Activated T-helper 1 cell treated with anti-CD3 and anti-CD28 coated beads, Interleukin-12 subunit alpha, Interleukin-12 subunit beta, Interleukin-2, Interleukin-4 antibody, amounts not matched to agents 30 ng/mL and 10 ng/mL and 1 ng/mL, durations not matched to agents 14 hours and 24 hours and 36 hours (primary cell): ENCODE measurements at regions of chrX and their contacts with region 1.

Region 1: GRCh38 chrX:10722851-10723250 is 102.5 kb upstream of the MID1 start:
- DNase-seq: no peak
- H3K4me3 Mint-ChIP-seq: no peak overlapping the region
- H3K27ac Mint-ChIP-seq: no peak overlapping the region
- H3K4me1 Mint-ChIP-seq: no peaks in the 10 kb centered on the region
- H3K27me3 Mint-ChIP-seq: no peaks in the 10 kb centered on the region

Region 2: DNA sequence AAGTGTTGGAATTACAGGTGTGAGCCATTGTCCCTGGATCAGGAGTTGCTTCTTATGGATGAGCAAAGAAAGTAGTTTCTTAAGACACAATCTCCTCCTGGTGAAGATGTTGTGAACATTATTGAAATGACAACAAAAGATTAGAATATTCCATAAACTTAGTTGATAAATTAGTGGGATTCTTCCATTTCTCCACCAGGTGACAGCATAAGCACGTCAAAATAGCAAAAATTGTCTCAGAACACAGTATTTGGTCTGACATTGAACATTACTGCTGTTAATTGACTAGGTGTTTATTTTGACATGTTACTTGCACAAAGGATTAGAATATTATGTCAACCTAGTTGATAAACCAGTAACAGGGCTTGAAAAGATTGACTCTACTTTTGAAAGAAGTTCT is 734.1 kb before region 1 on chrX:
- intact Hi-C with region 1: loop called (anchors 5 kb)
- DNase-seq: no peak
- H3K4me3 Mint-ChIP-seq: no peak overlapping the region
- H3K27ac Mint-ChIP-seq: no peak overlapping the region
- H3K4me1 Mint-ChIP-seq: no peaks in the 10 kb centered on the region
- H3K27me3 Mint-ChIP-seq: no peaks in the 10 kb centered on the region

Region 3: DNA sequence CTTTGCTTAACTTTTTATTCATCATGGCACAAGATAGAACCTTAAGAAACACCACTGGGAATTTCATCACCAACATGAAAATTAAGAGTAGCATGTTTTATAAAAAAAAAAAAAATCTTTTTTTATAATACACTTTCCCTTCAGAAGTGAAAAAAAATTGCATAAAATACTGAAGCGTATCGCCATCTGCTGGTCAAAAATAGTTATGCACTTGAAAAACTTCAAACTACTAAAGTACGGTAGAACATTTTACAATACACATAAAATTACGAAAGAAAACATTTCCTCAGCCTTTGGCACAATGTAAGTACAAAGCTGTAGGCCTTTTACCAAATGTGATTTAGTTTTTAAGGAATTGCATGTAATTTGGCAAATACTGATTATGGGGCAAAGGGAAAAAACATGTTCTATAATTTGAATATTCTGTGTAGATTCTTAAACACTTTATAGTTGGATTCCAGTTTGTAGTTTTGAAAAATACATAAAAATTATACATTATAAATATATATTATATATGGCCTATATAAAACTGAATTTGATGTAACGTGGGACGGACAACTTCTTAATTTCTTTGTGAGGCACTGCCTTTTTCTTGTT is 414.8 kb after region 1 on chrX:
- intact Hi-C with region 1: loop called (anchors 5 kb)
- DNase-seq: no peak
- H3K4me3 Mint-ChIP-seq: no peak overlapping the region
- H3K27ac Mint-ChIP-seq: no peak overlapping the region
- H3K4me1 Mint-ChIP-seq: no peaks in the 10 kb centered on the region
- H3K27me3 Mint-ChIP-seq: no peaks in the 10 kb centered on the region